Endothelial cell of umbilical vein (primary cell): ENCODE measurements at regions of chr12 and their contacts with region 1.

Region 1: DNA sequence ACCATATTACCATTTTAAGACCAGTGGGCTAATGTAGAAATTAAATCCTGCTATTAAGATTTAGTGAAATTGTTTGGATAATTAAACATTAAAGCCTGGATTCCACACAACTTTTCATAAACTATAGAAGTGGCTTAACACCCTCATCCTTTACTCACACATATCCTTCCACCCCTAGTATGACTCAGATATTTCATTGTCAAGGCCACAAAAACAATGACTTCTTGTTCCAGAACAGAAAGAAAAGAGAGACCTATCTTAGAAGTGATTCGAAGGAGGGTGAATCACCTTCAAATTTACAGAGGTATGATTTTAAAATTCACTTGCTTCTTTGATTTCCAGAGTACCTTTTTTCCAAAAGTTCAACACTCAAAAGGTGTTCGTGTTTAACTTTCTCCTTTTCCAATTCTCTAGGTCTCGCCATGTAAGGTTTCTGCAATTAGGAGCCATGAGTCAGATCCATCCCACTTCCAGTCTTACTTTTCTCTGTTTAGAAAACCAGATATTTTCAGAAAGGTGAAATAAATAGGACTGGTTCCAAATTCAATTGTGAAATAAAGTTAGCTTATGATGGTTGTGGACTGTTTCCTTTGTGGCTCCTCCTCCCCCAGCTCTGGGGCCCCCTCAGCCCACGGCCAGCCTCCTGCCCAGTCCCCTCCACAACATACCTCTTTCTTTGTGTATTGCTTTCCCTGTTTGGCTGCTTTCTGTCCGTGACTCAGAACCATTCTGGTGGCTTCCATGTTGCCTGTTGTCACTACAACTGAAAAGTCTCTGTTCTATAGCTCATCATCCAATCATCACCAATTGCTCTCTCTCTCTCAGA is 24.6 kb upstream of the MGP start:
- DNase-seq: peak; percentile 87
- H3K4me3 ChIP-seq: no peak overlapping the region
- H3K27ac ChIP-seq: peak overlapping the region; percentile 69
- H3K4me1 ChIP-seq: peaks cover 27% of the 10 kb centered on the region
- H3K27me3 ChIP-seq: no peaks in the 10 kb centered on the region
- CTCF ChIP-seq: no peak
- POLR2A ChIP-seq: peak; percentile 32

Region 2: GRCh38 chr12:14884458-14884878 is 25.8 kb before region 1 on chr12:
- CTCF ChIA-PET with region 1: no interaction called
- POLR2A ChIA-PET with region 1: no interaction called
- dilution Hi-C with region 1: no loop called
- intact Hi-C with region 1: loop called (anchors 1 kb)
- DNase-seq: peak; percentile 84
- H3K4me3 ChIP-seq: peak overlapping the region; percentile 17 to 64 (median 62)
- H3K27ac ChIP-seq: peak overlapping the region; percentile 49
- H3K4me1 ChIP-seq: peaks cover 38% of the 10 kb centered on the region
- H3K27me3 ChIP-seq: no peaks in the 10 kb centered on the region
- CTCF ChIP-seq: no peak
- POLR2A ChIP-seq: no peak

Region 3: GRCh38 chr12:14928969-14929368 is 18.7 kb after region 1 on chr12:
- CTCF ChIA-PET with region 1: no interaction called
- POLR2A ChIA-PET with region 1: no interaction called
- dilution Hi-C with region 1: no loop called
- intact Hi-C with region 1: loop called (anchors 1 kb)
- DNase-seq: peak; percentile 40
- H3K4me3 ChIP-seq: no peak overlapping the region
- H3K27ac ChIP-seq: no peak overlapping the region
- H3K4me1 ChIP-seq: peaks cover 6% of the 10 kb centered on the region
- H3K27me3 ChIP-seq: no peaks in the 10 kb centered on the region
- CTCF ChIP-seq: no peak
- POLR2A ChIP-seq: no peak